GM23248 (cell line): ENCODE measurements at regions of chr3 and their contacts with region 1.

Region 1: GRCh38 chr3:21752749-21753347 is 1.8 kb upstream of the ZNF385D start:
- DNase-seq: peak; percentile 91
- H3K4me3 ChIP-seq: no peak overlapping the region
- H3K27ac ChIP-seq: no peak overlapping the region
- H3K4me1 ChIP-seq: peaks cover 32% of the 10 kb centered on the region
- H3K27me3 ChIP-seq: no peaks in the 10 kb centered on the region

Region 2: DNA sequence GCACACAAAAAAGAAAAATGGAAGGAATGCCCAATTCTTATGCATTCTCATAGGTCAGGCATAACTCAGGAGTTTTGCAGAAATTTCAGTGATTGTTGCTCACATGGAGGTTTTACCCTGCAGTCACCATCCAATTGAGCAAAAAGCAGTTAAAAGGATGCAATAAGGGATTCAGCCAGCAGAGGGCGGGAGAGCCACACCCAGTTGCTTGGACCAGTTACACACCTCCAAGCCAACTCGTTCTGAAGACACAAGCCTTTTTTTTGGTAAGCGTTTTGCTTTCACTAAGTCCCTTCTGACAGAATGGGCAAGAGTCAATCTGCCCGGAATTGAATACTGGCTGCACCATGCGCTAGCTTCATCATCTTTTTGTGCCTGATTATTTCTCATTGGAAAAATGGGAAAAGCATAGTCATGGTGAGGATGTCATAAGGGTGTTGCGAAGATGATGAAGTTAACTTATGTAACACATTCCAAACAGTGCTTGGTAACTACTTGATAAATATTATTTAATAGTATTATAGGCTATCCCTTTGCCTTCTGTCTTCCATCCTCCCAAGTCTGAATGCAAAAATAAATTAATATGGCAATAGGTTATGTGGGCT is 1412.4 kb before region 1 on chr3:
- in situ Hi-C with region 1: loop called (anchors 25 kb)
- DNase-seq: peak; percentile 73
- H3K4me3 ChIP-seq: peak overlapping the region; percentile 52; the same call in 1 of the 2 replicates
- H3K27ac ChIP-seq: no peak overlapping the region
- H3K4me1 ChIP-seq: no peaks in the 10 kb centered on the region
- H3K27me3 ChIP-seq: no peaks in the 10 kb centered on the region

Region 3: GRCh38 chr3:21888656-21889055 is 135.8 kb after region 1 on chr3:
- in situ Hi-C with region 1: loop called (anchors 10 kb)
- DNase-seq: no peak
- H3K4me3 ChIP-seq: no peak overlapping the region
- H3K27ac ChIP-seq: no peak overlapping the region
- H3K4me1 ChIP-seq: 0 out of 2 replicates have a peak, but pooled peaks cover 3% of the 10 kb centered on the region
- H3K27me3 ChIP-seq: no peaks in the 10 kb centered on the region

Region 4: GRCh38 chr3:22089284-22089683 is 336.4 kb after region 1 on chr3:
- in situ Hi-C with region 1: loop called (anchors 25 kb)
- DNase-seq: peak; percentile 33
- H3K4me3 ChIP-seq: no peak overlapping the region
- H3K27ac ChIP-seq: no peak overlapping the region
- H3K4me1 ChIP-seq: no peaks in the 10 kb centered on the region
- H3K27me3 ChIP-seq: no peaks in the 10 kb centered on the region